ENCODE measurements at regions of chr14 and their contacts with region 1.

Region 1: DNA sequence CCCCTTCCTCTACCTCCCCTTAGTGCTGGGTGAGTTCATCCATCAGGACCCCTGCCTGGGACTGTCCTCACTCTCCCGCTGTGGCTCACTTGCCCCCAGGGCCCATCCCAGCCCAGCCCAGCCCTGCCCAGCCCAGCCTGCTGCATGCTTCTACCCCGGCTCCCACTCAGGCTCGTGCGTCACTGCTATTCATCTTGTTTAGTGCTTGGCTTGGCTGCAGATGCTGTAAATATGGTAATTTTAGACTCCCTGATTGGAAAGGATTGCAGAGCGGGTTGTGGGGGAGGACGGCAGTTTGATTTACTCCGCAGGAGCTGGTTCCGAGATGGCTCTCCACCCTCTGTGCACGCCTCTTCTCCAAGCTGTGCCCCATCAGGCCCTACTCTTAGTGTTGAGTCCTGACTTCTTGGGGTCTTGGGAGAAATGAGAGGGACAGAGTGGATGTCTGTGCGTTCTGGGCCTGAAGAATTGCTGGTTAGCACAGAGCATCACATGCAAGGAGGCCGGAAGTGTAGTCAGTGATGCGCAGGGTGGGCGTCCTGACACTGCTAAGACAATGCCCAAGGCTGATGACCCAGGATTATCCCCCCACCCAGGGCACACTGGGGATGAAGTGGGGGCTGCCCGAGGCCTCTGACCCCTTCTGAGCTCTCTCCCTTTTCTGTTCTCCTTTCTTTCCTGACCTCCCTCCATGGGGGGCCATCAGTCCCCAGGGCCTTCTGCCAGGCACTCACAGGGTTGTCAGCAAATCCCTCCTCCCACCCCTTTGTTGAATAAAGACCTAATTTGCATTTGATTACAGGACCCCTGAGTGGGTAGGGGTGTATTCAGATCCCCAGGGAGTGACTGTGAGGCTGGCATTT is 244.4 kb downstream of the ZFP36L1 start:
- DNase-seq: peak; percentile 70 to 97
- H3K4me3 ChIP-seq: no peak overlapping the region
- H3K27ac ChIP-seq: peak overlapping the region; percentile 96 to 98
- H3K4me1 ChIP-seq: peaks cover 30 to 72% of the 10 kb centered on the region in 2 donors
- H3K27me3 ChIP-seq: no peaks in the 10 kb centered on the region
- CTCF ChIP-seq: no peak

Region 2: DNA sequence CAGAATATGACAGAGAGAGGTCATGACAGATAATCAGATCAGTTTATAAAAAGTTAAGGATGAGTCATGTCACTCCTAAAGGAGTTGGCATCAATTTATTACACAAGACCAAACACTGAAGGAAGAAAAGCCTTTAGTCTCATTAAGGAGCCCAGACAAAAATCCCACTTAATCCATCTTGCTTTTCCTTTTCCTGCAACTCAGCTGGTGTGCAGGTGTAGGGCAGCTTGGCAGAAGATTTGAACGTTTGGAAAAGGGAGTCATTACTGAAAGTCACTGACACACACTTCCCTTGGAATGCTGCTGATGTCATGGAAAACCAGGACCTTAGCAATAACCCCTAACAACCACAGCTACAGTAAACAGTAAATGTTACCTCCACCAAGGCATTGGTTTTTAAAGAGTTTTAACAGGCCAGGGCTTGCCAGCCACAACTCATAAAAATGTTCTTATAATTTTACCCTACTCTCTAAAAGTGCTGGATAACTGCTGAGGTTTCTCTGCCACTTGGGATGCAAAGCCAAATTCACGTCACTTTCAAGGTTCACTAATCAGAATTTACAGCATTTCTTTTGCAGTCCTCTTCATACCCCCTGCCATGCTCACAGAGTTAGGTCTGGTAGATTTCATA is 408.2 kb before region 1 on chr14:
- intact Hi-C with region 1: loop called (anchors 10 kb)
- DNase-seq: peak in 1 of 2 donors; percentile 83
- H3K4me3 ChIP-seq: no peak overlapping the region
- H3K27ac ChIP-seq: peak overlapping the region; percentile 68 to 76
- H3K4me1 ChIP-seq: peaks cover 0 to 47% of the 10 kb centered on the region in 2 donors
- H3K27me3 ChIP-seq: no peaks in the 10 kb centered on the region
- CTCF ChIP-seq: no peak

Region 3: DNA sequence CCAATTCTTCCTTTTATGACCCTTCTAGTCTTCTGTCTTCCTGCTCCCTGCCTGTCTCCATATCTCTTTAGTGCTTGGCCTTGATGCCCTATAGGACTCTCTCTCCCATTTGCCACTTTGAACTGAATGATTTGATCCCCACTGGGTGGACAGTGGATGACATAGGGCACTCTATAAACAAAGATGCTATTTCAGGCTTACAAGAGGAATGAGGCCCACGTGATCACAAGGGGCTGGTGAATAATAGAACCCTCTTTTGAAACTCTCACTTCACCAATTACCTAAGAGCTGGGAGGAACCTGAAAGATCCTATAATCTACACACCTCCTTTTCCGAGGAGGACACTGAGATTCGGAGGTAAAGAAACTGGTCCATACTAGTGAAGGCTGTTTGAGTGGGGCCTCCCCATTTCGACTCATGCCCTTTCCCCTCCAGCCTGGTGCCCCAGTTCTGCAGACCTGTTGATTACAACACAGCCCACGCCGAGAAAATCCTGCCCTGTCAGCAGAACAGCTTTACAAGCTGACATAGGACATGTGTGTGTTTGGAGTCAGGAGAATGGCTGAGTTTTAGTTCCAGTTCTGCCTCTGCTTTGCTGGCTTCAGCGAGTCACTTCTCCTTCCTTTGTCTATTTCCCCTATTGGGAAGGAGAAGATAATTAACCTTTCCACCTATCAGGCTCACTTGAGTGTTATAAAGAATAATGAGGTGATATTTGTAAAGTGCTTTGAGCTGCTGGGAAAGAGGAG is 155.9 kb before region 1 on chr14:
- intact Hi-C with region 1: loop called (anchors 2 kb)
- DNase-seq: peak; percentile 41 to 82
- H3K4me3 ChIP-seq: no peak overlapping the region
- H3K27ac ChIP-seq: peak overlapping the region; percentile 85 to 91
- H3K4me1 ChIP-seq: peaks cover 18 to 61% of the 10 kb centered on the region in 2 donors
- H3K27me3 ChIP-seq: no peaks in the 10 kb centered on the region
- CTCF ChIP-seq: no peak

Region 4: DNA sequence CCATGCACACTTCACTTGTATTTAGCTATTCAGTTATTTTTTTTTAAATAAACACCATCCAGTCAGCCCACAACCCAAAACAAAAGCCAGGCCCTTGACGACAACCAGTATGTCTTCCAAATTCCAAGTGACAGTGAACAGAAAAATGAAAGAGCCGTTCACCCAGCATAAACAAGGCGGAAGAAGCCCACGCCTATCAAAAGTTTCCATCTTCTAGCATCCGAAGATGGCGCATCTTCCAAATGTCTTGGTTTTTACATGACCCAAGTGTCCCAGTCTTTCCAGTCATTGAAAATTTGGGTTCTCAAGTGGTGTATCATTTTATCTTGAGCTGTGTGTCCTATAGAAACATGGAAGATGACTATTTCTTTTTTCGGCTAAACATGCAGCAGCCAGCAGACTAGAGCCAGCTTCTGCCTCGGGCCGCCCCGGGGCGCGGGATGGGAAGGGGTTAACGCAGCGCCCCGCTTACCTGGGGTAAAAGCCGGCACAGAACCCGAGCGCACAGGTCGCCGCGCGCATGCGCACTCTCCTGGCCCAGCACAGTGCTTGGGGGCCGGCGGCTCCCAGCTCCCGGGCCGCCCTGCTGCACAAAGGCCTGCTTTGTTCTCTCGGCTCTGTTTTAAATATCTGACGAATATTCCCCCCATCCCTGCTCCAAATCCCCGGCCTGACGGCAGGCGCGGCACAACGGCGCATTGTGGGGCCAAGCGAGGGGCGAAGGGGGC is 79.6 kb after region 1 on chr14:
- intact Hi-C with region 1: loop called (anchors 5 kb)
- DNase-seq: no peak
- H3K4me3 ChIP-seq: peak overlapping the region in 1 of 2 donors; percentile 37
- H3K27ac ChIP-seq: peak overlapping the region; percentile 75 to 81
- H3K4me1 ChIP-seq: peaks cover 8 to 33% of the 10 kb centered on the region in 2 donors
- H3K27me3 ChIP-seq: no peaks in the 10 kb centered on the region
- CTCF ChIP-seq: no peak

Region 5: GRCh38 chr14:68695326-68695768 is 146.9 kb after region 1 on chr14:
- intact Hi-C with region 1: loop called (anchors 5 kb)
- DNase-seq: peak; percentile 56 to 87
- H3K4me3 ChIP-seq: no peak overlapping the region
- H3K27ac ChIP-seq: peak overlapping the region; percentile 73 to 85
- H3K4me1 ChIP-seq: peaks cover 0 to 16% of the 10 kb centered on the region in 2 donors
- H3K27me3 ChIP-seq: no peaks in the 10 kb centered on the region
- CTCF ChIP-seq: no peak